Sigmoid colon (tissue), 7 donors: ENCODE measurements at regions of chr6 and their contacts with region 1.

Region 1: DNA sequence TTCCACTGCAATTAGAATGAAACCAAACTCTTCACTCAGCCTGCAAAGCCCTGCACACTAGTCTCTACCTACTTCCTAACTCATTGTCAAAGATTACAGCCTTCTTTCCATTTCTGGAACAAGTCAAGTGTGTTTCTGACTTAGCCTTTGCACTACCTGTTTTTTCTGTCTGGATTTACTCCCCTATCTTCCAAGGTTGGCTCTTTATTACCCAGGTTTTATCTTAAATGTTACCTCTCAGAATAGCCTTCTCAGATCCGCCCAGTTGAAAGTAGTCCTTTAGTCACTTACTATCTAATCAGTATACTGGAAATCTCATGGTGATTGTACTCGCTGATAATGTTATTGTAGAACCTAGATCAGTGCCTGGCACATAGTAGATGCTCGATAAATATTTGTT is 42.7 kb downstream of the TBPL1 start:
- DNase-seq: no peak
- H3K4me3 ChIP-seq: no peak overlapping the region
- H3K27ac ChIP-seq: no peak overlapping the region
- H3K4me1 ChIP-seq: peaks cover 0 to 33% (median 19%) of the 10 kb centered on the region in 4 donors
- H3K27me3 ChIP-seq: no peaks in the 10 kb centered on the region
- CTCF ChIP-seq: no peak
- EP300 ChIP-seq: no peak
- POLR2A ChIP-seq: no peak

Region 2: GRCh38 chr6:134057478-134057877 is 61.7 kb after region 1 on chr6:
- intact Hi-C with region 1: loop called (anchors 2 kb)
- DNase-seq: no peak
- H3K4me3 ChIP-seq: no peak overlapping the region
- H3K27ac ChIP-seq: no peak overlapping the region
- H3K4me1 ChIP-seq: peaks cover 0 to 30% (median 25%) of the 10 kb centered on the region in 4 donors
- H3K27me3 ChIP-seq: no peaks in the 10 kb centered on the region
- CTCF ChIP-seq: no peak
- EP300 ChIP-seq: no peak
- POLR2A ChIP-seq: no peak